ENCODE measurements at regions of chr7 and their contacts with region 1.

Region 1: GRCh38 chr7:91636129-91636724 is 244.3 kb downstream of the MTERF1 start:
- DNase-seq: peak; percentile 67
- H3K4me3 Mint-ChIP-seq: no peak overlapping the region
- H3K27ac Mint-ChIP-seq: no peak overlapping the region
- H3K4me1 Mint-ChIP-seq: peaks cover 6% of the 10 kb centered on the region
- H3K27me3 Mint-ChIP-seq: no peaks in the 10 kb centered on the region
- CTCF ChIP-seq: peak; percentile 50

Region 2: DNA sequence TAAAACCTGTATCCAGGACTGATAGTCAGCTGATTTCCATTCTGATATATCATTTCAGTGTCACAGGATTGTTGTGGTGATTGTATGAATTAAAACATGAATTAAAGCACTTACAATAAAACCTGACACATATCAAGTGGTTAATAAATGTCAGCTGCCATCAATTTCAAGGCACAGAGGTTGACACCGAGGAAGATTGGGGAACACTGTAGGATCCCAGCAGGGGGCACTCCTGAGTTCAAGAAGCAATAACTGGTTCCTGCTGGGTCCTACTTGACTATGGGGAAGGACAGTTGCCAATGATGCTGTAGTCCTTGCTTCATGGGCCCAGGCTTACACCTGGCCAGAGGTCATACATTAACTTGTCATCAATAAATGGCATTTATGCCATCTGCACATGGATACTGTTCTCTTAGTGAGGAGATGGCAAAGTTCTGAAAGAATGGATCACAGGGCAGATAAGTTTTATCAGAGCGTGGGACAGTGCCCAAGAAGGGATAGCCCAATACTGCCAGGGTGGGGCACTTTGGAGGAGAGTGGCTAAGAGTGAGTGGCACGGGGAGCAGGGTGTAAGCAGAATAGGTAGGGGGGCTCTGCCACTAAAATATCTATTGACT is 347.9 kb before region 1 on chr7:
- CTCF ChIA-PET with region 1: interaction called, 4 read pairs
- POLR2A ChIA-PET with region 1: interaction called, 4 read pairs
- intact Hi-C with region 1: loop called (anchors 2 kb)
- DNase-seq: peak; percentile 65
- H3K4me3 Mint-ChIP-seq: no peak overlapping the region
- H3K27ac Mint-ChIP-seq: no peak overlapping the region
- H3K4me1 Mint-ChIP-seq: peaks cover 6% of the 10 kb centered on the region
- H3K27me3 Mint-ChIP-seq: peaks cover 24% of the 10 kb centered on the region
- CTCF ChIP-seq: peak; percentile 51

Region 3: DNA sequence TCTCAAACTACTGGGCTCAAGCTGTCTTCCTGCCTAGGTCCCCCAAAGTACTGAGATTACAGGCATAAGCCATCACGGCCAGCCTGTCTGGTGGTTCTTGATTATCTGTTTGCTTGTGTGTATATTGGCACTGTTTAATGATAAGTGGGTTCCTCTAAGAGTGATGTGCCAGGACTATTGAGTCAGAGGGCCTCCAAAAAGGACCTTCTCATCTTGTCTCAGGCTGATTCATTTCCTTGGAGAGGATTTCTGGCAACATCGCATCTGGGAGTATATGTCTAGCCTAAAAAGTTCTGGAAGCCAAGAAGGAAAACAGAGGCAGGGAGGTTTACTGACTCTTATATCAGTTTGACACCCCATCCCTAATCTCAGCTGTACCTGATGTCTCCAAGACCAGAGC is 277.4 kb after region 1 on chr7:
- CTCF ChIA-PET with region 1: no interaction called
- POLR2A ChIA-PET with region 1: no interaction called
- intact Hi-C with region 1: no loop called
- DNase-seq: peak; percentile 10
- H3K4me3 Mint-ChIP-seq: no peak overlapping the region
- H3K27ac Mint-ChIP-seq: no peak overlapping the region
- H3K4me1 Mint-ChIP-seq: no peaks in the 10 kb centered on the region
- H3K27me3 Mint-ChIP-seq: no peaks in the 10 kb centered on the region
- CTCF ChIP-seq: no peak

Region 4: GRCh38 chr7:92164559-92164958 is 528.3 kb after region 1 on chr7:
- CTCF ChIA-PET with region 1: no interaction called
- POLR2A ChIA-PET with region 1: no interaction called
- intact Hi-C with region 1: no loop called
- DNase-seq: no peak
- H3K4me3 Mint-ChIP-seq: no peak overlapping the region
- H3K27ac Mint-ChIP-seq: no peak overlapping the region
- H3K4me1 Mint-ChIP-seq: peaks cover under 1% of the 10 kb centered on the region
- H3K27me3 Mint-ChIP-seq: peaks cover 16% of the 10 kb centered on the region
- CTCF ChIP-seq: no peak